Activated B cell treated with CpG ODN at 0.5 μM for 24 hours (primary cell): ENCODE measurements at regions of chr11 and their contacts with region 1.

Region 1: DNA sequence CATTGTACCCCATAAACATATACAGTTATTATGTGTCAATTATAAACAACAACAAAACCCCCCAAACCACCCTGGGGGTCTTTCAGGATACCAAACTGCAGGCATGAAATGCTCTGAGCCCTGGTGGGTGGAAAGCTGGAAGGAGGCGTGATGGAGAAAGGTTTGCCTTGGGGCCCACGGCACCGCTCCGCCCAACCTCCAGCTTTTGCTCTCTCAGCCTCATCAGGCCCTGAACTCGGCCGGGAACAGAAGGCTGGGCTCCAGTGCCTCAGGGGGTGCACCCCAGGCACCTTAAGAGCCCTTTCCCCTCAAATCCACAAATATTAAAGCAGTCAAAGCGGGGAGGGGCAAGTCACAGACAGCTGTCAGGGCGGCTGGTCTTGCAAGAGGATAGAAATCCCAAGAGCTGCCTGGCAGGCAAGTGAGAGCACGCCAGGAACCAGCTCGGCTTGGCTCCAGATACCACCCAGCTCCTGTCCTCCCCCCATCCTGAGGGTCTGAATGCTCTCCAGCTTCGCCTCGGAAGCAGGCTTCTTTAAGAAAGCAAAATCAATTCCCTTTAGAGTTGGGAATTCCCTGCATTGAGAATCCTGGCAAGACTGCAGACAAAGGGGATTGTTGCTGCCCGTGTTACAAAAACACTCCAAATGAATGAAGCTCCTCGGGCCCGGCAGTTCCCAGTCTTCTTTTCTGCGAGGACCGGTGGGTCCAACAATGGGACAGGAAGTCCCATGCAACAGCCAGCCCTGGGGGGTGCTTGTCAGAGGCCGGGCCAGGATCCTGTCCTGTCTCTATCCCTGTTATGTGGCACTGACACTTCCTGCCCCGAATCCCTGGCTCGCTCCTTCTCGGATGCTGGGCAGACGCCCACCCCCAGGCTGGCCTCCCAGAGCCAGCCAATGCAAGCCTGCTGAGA is 80.8 kb downstream of the NAT10 start:
- DNase-seq: no peak
- ATAC-seq: no peak
- H3K4me3 Mint-ChIP-seq: no peak overlapping the region
- H3K27ac Mint-ChIP-seq: no peak overlapping the region
- H3K4me1 Mint-ChIP-seq: peaks cover 26% of the 10 kb centered on the region
- H3K27me3 Mint-ChIP-seq: no peaks in the 10 kb centered on the region
- CTCF ChIP-seq: no peak

Region 2: GRCh38 chr11:33700425-33701271 is 485.5 kb before region 1 on chr11 and contains the start of gene C11orf91:
- CTCF ChIA-PET with region 1: no interaction called
- POLR2A ChIA-PET with region 1: no interaction called
- intact Hi-C with region 1: no loop called
- DNase-seq: peak; percentile 97
- ATAC-seq: peak; percentile 98
- H3K4me3 Mint-ChIP-seq: peak within 1 kb of the TSS; percentile 91
- H3K27ac Mint-ChIP-seq: peak within 1 kb of the TSS; percentile 47
- H3K4me1 Mint-ChIP-seq: peaks cover 13% of the 10 kb centered on the region
- H3K27me3 Mint-ChIP-seq: peaks cover 2% of the 10 kb centered on the region
- CTCF ChIP-seq: no peak
- total RNA-seq, gene C11orf91: 0.49 TPM in 1 of 2 replicates, not detected in the other

Region 3: GRCh38 chr11:34223021-34223813 is 37.0 kb after region 1 on chr11:
- CTCF ChIA-PET with region 1: no interaction called
- POLR2A ChIA-PET with region 1: no interaction called
- intact Hi-C with region 1: no loop called
- DNase-seq: no peak
- ATAC-seq: no peak
- H3K4me3 Mint-ChIP-seq: no peak overlapping the region
- H3K27ac Mint-ChIP-seq: no peak overlapping the region
- H3K4me1 Mint-ChIP-seq: peaks cover 7% of the 10 kb centered on the region
- H3K27me3 Mint-ChIP-seq: no peaks in the 10 kb centered on the region
- CTCF ChIP-seq: no peak

Region 4: DNA sequence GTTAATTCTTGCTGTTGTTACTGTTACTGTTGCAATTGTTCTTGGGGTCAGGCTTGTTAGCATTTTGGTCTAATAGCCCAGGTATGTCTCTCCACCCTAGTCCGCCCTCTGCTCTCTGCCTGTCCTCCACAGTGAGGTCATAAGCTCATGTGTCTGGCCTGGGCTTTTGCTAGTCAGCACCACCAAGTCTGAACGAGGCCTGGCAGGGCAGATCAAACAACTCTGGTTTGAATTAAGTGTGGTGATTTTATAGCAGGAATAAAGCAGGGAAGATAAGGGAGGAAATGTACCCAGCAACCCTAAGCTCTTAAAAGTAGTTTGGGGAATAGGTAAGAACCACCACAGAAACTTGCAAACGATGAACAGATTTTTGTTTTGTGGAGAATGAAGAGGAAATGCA is 72.9 kb after region 1 on chr11:
- CTCF ChIA-PET with region 1: no interaction called
- POLR2A ChIA-PET with region 1: interaction called, 12 read pairs
- intact Hi-C with region 1: no loop called
- DNase-seq: no peak
- ATAC-seq: no peak
- H3K4me3 Mint-ChIP-seq: no peak overlapping the region
- H3K27ac Mint-ChIP-seq: no peak overlapping the region
- H3K4me1 Mint-ChIP-seq: peaks cover under 1% of the 10 kb centered on the region
- H3K27me3 Mint-ChIP-seq: no peaks in the 10 kb centered on the region
- CTCF ChIP-seq: no peak